ENCODE measurements at regions of chr3 and their contacts with region 1.

Region 1: GRCh38 chr3:32018757-32019564 is 37.4 kb downstream of the ZNF860 start:
- DNase-seq: no peak
- ATAC-seq: peak; percentile 95

Region 2: DNA sequence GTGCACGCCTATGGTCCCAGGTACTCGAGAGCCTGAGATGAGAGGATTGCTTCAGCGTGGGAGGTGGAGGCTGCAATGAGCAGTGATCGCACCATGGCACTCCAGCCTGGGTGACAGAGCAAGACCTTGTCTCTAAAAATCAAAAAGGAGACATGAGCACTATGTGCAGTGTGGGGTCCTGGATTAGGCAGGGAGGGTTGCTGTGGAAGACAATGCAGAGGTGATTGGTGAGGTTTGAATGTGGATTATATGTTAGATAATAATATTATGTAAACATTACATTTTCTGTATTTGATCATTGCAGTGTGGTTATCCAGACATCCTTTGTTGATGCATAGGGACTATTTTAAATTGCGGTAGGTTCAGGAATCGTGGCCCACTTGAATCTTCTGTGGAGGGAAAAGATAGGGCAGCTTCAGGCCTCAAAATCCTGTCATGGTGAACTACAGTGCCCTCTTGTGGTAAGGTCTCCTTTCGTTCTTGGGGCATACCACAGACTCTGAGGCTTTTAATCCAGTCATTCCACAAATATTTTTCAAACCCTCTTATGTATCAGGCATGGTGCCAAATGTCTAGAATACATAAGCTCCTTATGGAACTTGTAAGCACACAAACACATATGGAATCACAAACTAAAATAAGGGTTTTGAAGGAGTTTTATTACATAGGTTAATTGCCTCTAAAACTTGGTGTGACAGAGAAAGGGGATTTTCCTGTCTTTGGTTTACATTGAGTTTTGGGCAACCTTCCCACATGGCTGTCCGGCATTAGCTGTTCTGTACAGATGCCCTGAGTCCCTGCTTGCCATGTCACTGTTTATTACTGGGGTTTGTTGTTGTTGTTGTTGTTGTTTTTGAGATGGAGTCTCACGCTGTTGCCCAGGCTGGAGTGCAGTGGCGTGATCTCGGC is 125.1 kb after region 1 on chr3:
- intact Hi-C with region 1: loop called (anchors 2 kb)
- DNase-seq: no peak
- ATAC-seq: peak; percentile 87

Measured in Right ventricle myocardium superior (tissue), 1 donor.